ENCODE measurements at regions of chr12 and their contacts with region 1.

Region 1: GRCh38 chr12:66087365-66087943 is 43.1 kb downstream of the LLPH start:
- DNase-seq: peak; percentile 36 to 73
- ATAC-seq: peak; percentile 71

Region 2: DNA sequence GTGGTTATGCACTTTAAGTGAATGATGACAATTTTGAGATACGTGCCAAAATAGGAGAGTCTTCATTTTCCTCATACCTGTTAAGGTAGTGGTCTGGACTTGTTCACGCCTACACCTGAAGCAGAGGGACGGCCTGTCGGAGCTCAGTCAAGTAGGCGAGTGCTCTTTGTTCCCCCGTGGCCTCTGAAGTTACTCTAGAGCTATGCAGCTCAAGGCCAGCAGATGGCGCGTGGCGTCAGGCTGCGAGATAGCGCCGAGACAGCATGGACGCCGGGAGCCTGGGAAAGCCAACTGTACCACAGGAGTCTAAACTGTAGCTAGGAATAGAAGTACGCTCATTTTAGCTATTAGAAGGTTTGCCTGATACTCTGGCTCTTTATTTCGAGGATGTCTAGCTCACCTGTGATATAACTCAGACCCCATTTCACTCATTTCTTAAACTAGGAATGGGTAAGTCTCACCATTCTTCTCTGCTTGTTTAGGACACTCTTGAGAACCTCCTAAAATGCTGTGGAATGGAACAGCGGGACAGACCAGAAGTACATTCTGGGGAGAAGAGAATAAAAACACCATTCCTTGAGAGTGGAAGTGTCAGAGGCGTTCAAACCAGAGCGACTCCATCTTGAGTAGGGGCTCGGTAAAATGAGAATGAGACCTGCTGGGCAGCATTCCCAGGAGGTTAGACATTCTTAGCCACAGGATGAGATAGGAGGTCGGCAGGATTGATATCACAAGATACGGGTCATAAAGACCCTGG is 530.6 kb before region 1 on chr12:
- intact Hi-C with region 1: loop called in 1 of 2 experiments (anchors 5 kb)
- DNase-seq: peak; percentile 59 to 85
- ATAC-seq: peak; percentile 100

Region 3: DNA sequence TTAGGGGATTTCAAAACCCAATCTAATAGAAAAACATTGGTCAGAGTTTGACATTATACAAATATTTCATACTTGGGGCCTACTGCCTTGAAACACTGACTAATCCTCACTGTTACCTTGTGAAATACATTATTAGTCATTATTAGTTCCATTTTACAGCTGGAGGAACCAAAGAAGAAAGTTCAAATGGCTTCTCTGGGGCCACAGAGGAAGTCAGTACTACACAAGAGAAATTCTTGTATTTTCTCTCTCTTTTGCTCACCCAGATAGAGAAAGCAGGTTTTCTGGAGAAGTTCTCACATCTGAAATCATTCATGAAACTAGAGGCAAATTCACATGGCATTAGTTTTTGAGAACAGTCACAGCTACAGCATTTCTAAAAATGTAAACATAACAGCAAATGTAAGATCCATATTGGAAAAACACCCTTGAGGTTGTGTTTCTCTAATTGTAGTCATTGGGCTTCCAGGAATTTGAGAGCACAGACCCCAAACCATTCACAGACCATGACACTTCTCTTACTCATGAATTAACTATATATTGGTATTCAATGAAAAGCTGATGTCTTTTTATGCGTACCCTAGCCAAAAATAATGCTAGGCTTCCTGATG is 39.9 kb before region 1 on chr12:
- intact Hi-C with region 1: no loop called
- DNase-seq: no peak
- ATAC-seq: no peak

Measured in left colon (tissue), 2 donors.